ENCODE measurements at regions of chr12 and their contacts with region 1.

Region 1: GRCh38 chr12:68119724-68120211 is 39.8 kb downstream of the IFNG start:
- DNase-seq: peak; percentile 89
- H3K4me3 Mint-ChIP-seq: peak overlapping the region; percentile 27
- H3K27ac Mint-ChIP-seq: peak overlapping the region; percentile 74
- H3K4me1 Mint-ChIP-seq: peaks cover 31% of the 10 kb centered on the region
- H3K27me3 Mint-ChIP-seq: peaks cover 3% of the 10 kb centered on the region

Region 2: GRCh38 chr12:67804168-67804567 is 315.6 kb before region 1 on chr12:
- CTCF ChIA-PET with region 1: no interaction called
- POLR2A ChIA-PET with region 1: no interaction called
- intact Hi-C with region 1: loop called (anchors 10 kb)
- DNase-seq: peak; percentile 80
- H3K4me3 Mint-ChIP-seq: no peak overlapping the region
- H3K27ac Mint-ChIP-seq: no peak overlapping the region
- H3K4me1 Mint-ChIP-seq: peaks cover 31% of the 10 kb centered on the region
- H3K27me3 Mint-ChIP-seq: no peaks in the 10 kb centered on the region

Region 3: GRCh38 chr12:68137335-68137830 is 17.6 kb after region 1 on chr12:
- CTCF ChIA-PET with region 1: interaction called, 6 read pairs
- POLR2A ChIA-PET with region 1: interaction called, 12 read pairs
- intact Hi-C with region 1: loop called (anchors 1 kb)
- DNase-seq: peak; percentile 25
- H3K4me3 Mint-ChIP-seq: no peak overlapping the region
- H3K27ac Mint-ChIP-seq: peak overlapping the region; percentile 75
- H3K4me1 Mint-ChIP-seq: peaks cover 59% of the 10 kb centered on the region
- H3K27me3 Mint-ChIP-seq: no peaks in the 10 kb centered on the region

Region 4: DNA sequence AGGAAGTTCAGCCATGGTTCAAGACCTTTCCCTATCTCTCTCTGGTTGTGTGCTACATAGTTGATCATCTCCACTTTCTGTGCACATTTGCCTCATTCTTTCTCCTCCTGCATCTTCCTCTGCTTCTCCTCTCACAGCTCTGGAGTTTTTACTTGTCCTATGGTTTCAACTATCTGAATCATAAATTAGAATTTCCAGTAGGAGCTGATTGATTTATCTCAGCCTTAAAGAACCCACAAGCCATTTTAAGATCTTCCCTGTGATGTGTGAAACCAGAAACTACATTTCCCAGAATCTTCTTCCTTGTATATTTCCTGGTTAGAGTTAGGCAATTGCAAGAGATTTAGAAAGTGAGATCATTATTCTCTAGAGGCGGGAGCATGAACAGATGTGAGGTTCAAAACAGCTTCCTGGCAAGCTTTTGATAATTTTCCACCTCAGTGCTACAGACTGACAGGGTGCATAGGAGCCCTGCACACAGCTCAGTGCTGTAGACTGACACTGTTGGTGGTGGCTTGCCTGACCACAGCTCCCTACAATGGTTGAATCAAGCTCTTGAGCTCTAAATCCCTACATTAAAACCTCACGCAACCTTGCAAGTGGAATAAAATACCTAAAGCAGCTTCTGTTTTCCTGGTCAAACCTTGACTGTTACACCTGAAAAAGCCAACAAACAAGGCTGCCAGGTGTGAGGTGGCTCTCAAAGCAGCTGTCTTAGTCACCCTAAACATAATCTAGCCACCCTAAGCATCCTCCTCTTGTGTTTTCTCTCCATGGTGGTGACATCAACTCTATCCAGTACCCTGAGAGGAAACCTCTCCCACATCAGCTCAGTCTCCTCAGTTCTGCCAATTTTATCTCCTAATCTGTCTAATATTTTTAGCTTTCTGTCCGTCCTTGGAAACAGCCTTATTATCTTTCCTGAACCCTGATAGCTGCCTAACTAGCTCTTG is 61.3 kb after region 1 on chr12:
- CTCF ChIA-PET with region 1: interaction called, 4 read pairs
- POLR2A ChIA-PET with region 1: interaction called, 11 read pairs
- intact Hi-C with region 1: loop called (anchors 1 kb)
- DNase-seq: peak; percentile 63
- H3K4me3 Mint-ChIP-seq: no peak overlapping the region
- H3K27ac Mint-ChIP-seq: peak overlapping the region; percentile 78
- H3K4me1 Mint-ChIP-seq: peaks cover 54% of the 10 kb centered on the region
- H3K27me3 Mint-ChIP-seq: no peaks in the 10 kb centered on the region

Region 5: GRCh38 chr12:68374307-68374982 is 254.7 kb after region 1 on chr12:
- CTCF ChIA-PET with region 1: no interaction called
- POLR2A ChIA-PET with region 1: no interaction called
- intact Hi-C with region 1: loop called (anchors 2 kb)
- DNase-seq: peak; percentile 84
- H3K4me3 Mint-ChIP-seq: peak overlapping the region; percentile 27
- H3K27ac Mint-ChIP-seq: peak overlapping the region; percentile 98
- H3K4me1 Mint-ChIP-seq: peaks cover 45% of the 10 kb centered on the region
- H3K27me3 Mint-ChIP-seq: no peaks in the 10 kb centered on the region

Region 6: GRCh38 chr12:68610370-68611093 is 490.8 kb after region 1 on chr12 and contains the start of gene RAP1B:
- CTCF ChIA-PET with region 1: no interaction called
- POLR2A ChIA-PET with region 1: interaction called, 3 read pairs
- intact Hi-C with region 1: loop called (anchors 5 kb)
- DNase-seq: peak; percentile 92
- H3K4me3 Mint-ChIP-seq: peak within 1 kb of the TSS; percentile 94
- H3K27ac Mint-ChIP-seq: peak within 1 kb of the TSS; percentile 98
- H3K4me1 Mint-ChIP-seq: peaks cover 37% of the 10 kb centered on the region
- H3K27me3 Mint-ChIP-seq: no peaks in the 10 kb centered on the region
- total RNA-seq, gene RAP1B: 211 to 213 TPM